ENCODE measurements at regions of chr2 and their contacts with region 1.

Region 1: DNA sequence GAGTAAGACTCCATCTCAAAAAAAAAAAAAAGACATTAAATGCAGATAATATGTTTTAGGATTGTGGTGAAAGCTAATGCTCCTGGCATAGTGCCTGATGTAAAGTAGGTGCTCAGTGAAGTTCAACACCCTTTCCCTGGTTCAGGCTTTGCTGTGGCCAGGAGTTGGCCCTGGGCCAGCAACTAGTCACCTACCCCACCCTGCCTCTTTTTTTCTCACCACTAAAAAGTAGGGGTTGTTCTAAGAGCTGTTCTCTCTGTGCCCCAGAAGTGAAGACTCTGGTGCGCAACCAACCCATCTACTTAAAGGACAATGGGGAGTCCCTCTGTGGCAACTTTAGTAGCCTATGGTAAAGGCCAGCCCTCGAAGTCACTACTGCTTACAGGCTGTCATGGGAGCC is 75.9 kb downstream of the DNMT3A start:
- DNase-seq: peak in 9 of 10 donors; percentile 23 to 74 (median 55)
- ATAC-seq: peak; percentile 87 to 89
- H3K4me3 Mint-ChIP-seq: peak overlapping the region in 8 of 10 donors; percentile 37 to 75 (median 60)
- H3K27ac Mint-ChIP-seq: peak overlapping the region; percentile 55 to 93 (median 84)
- H3K4me1 Mint-ChIP-seq: peaks cover 28 to 72% (median 63%) of the 10 kb centered on the region in 4 donors
- H3K27me3 Mint-ChIP-seq: no peaks in the 10 kb centered on the region

Region 2: DNA sequence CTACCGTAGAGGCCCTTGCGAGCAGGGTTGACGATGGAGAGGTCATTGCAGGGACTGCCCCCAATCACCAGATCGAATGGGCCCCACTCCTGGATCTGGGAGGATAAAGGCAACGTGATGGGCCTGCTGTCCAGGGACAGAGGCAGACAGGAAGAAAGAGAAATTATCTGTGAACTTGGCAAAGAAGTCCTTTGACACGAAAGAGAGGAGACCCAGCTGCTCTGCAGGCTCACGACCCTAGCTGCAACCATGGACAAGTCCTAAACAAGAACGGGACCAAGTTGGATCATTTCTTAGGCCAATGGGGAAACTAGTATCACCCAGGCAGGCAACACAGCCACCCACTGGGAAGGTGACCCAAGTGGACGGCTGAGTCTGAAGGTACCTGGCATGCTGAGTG is 25.2 kb before region 1 on chr2:
- POLR2A ChIA-PET with region 1: no interaction called
- DNase-seq: no peak
- ATAC-seq: no peak
- H3K4me3 Mint-ChIP-seq: no peak overlapping the region
- H3K27ac Mint-ChIP-seq: peak overlapping the region in 6 of 10 donors; percentile 8 to 76 (median 60)
- H3K4me1 Mint-ChIP-seq: peaks cover 1 to 15% (median 11%) of the 10 kb centered on the region in 4 donors
- H3K27me3 Mint-ChIP-seq: no peaks in the 10 kb centered on the region

Region 3: GRCh38 chr2:25252281-25253105 is 13.3 kb before region 1 on chr2:
- POLR2A ChIA-PET with region 1: interaction called, 14 read pairs
- DNase-seq: peak; percentile 35 to 72 (median 49)
- ATAC-seq: peak; percentile 46 to 56
- H3K4me3 Mint-ChIP-seq: peak overlapping the region; percentile 83 to 95 (median 91)
- H3K27ac Mint-ChIP-seq: peak overlapping the region; percentile 85 to 96 (median 91)
- H3K4me1 Mint-ChIP-seq: peaks cover 42 to 62% (median 53%) of the 10 kb centered on the region in 4 donors
- H3K27me3 Mint-ChIP-seq: no peaks in the 10 kb centered on the region